GM12878 (cell line): ENCODE measurements at regions of chr12 and their contacts with region 1.

Region 1: DNA sequence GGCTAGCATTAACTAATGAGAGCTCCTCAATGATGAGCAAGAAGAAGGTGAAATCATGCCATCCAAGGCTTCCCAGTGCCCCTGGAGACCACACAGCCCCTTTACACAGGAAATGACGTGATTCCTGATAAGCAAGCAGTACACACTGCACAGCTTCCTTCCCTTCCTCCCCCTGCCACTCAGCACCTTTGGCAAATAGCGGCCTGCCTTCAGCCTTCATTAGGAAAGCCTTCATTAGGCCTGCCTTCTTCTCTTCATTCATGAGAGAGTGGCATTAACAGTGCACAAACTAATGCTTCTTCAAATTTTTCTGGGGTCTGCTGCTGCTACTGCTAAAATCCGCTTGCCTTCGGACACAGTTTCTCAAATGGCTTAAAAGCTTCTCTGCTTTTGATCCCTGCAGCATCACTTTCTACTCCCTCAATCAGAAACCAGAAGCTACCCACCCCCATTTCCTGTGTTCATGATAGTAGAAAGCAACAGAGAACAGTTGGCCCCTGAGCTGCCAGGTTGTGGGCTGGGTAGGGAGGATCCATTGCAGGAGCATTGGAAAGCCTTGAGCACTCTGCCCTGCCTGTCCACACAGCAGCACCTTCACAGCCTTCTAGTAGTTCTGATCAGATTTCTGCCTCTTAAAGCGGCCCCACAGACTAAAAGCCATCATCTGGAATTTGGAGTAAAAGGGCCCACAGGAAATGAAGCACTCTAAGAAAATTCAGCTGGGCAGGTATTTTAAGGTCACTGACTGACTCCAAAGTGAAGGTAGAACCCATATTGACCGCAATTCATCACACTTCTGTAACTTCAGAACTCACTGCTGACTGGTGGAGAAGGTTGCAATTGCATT is 103.8 kb upstream of the ETV6 start:
- DNase-seq: peak; percentile 78
- ATAC-seq: peak; percentile 90
- H3K4me3 ChIP-seq: peak overlapping the region; percentile 31; the same call in 1 of the 2 replicates
- H3K27ac ChIP-seq: peak overlapping the region; percentile 94
- H3K4me1 ChIP-seq: peaks cover 27% of the 10 kb centered on the region
- H3K27me3 ChIP-seq: no peaks in the 10 kb centered on the region
- CTCF ChIP-seq: peak in 2 of 3 experiments; percentile 39 to 44; a peak in 2 of 6 replicates
- EP300 ChIP-seq: 0 out of 4 replicates have a peak, but pooled peaks of 1 of the 2 experiments have one; percentile 30
- POLR2A ChIP-seq: peak; percentile 65
- RAD21 ChIP-seq: no peak

Region 2: GRCh38 chr12:11324426-11324825 is 221.3 kb before region 1 on chr12:
- CTCF ChIA-PET with region 1: no interaction called
- POLR2A ChIA-PET with region 1: no interaction called
- RAD21 ChIA-PET with region 1: no interaction called
- SMC1A ChIA-PET with region 1: no interaction called
- in situ Hi-C with region 1: no loop called
- intact Hi-C with region 1: no loop called
- DNase-seq: no peak
- ATAC-seq: no peak
- H3K4me3 ChIP-seq: no peak overlapping the region
- H3K27ac ChIP-seq: no peak overlapping the region
- H3K4me1 ChIP-seq: no peaks in the 10 kb centered on the region
- H3K27me3 ChIP-seq: no peaks in the 10 kb centered on the region
- CTCF ChIP-seq: no peak
- EP300 ChIP-seq: no peak
- POLR2A ChIP-seq: no peak
- RAD21 ChIP-seq: no peak

Region 3: DNA sequence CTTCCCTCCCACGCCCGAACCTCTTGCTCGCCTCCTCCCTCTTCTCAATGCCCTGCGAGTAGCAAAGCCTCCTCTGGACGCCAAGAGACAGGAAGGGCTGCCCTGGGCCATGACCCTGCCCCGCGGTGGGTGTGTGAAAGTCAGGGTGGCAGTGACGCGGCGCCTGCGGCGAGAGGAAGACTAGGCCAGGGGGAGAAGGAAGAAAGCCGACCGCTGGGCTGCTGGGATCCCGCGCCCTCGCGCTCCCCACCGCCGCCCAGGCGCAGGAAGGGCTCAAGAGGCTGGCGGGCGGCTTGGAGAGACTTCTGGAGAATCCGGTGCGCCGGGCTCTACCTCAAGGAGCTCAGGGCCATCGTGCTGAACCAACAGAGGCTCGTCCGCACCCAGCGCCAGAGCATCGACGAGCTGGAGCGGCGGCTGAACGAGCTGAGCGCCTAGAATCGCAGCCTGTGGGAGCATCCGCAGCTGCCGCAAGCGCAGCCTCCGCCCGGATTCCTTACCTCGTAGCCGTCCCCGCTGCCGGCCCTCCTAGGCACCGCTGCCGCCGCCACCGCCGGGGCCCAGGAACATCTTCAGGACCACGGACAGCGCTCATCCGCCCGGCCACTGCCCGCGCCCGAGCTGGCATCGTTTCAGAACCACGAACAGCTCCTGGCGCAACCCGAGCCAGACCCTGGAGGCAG is 45.4 kb before region 1 on chr12:
- CTCF ChIA-PET with region 1: interaction called, 7 read pairs
- POLR2A ChIA-PET with region 1: no interaction called
- RAD21 ChIA-PET with region 1: interaction called, 3 read pairs
- SMC1A ChIA-PET with region 1: interaction called, 6 read pairs
- in situ Hi-C with region 1: no loop called
- intact Hi-C with region 1: loop called (anchors 2 kb)
- DNase-seq: no peak
- ATAC-seq: peak; percentile 83
- H3K4me3 ChIP-seq: no peak overlapping the region
- H3K27ac ChIP-seq: no peak overlapping the region
- H3K4me1 ChIP-seq: peaks cover 5% of the 10 kb centered on the region
- H3K27me3 ChIP-seq: peaks cover 0 to 7% of the 10 kb centered on the region in 2 experiments; a peak in 3 of 4 replicates
- CTCF ChIP-seq: no peak
- EP300 ChIP-seq: no peak; a peak in 1 of 4 replicates
- POLR2A ChIP-seq: no peak
- RAD21 ChIP-seq: no peak

Region 4: DNA sequence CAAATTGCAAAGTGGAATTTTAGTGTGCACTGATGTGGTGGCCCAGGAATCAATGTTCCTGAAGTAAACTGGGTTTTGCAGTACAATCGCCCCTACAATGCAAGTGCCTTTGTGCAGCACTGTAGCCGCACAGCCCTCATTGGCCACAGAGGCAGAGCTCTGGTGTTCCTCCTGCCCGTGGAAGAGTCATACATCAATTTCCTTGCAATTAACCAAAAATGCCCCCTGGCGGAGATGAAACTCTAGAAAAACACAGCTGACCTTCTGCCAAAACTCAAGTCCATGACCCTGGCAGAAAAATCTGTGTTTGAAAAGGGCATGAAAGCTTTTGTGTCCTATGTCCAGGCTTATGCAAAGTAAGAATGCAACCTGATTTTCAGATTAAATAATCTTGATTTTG is 32.4 kb before region 1 on chr12:
- CTCF ChIA-PET with region 1: interaction called, 7 read pairs
- POLR2A ChIA-PET with region 1: no interaction called
- RAD21 ChIA-PET with region 1: interaction called, 12 read pairs
- SMC1A ChIA-PET with region 1: interaction called, 25 read pairs
- in situ Hi-C with region 1: no loop called
- intact Hi-C with region 1: no loop called
- DNase-seq: no peak
- ATAC-seq: no peak
- H3K4me3 ChIP-seq: no peak overlapping the region
- H3K27ac ChIP-seq: no peak overlapping the region
- H3K4me1 ChIP-seq: no peaks in the 10 kb centered on the region
- H3K27me3 ChIP-seq: no peaks in the 10 kb centered on the region
- CTCF ChIP-seq: 0 out of 6 replicates have a peak, but pooled peaks of 1 of the 3 experiments have one; percentile 11
- EP300 ChIP-seq: no peak
- POLR2A ChIP-seq: no peak
- RAD21 ChIP-seq: 0 out of 2 replicates have a peak, but pooled peaks have one; percentile 22

Region 5: DNA sequence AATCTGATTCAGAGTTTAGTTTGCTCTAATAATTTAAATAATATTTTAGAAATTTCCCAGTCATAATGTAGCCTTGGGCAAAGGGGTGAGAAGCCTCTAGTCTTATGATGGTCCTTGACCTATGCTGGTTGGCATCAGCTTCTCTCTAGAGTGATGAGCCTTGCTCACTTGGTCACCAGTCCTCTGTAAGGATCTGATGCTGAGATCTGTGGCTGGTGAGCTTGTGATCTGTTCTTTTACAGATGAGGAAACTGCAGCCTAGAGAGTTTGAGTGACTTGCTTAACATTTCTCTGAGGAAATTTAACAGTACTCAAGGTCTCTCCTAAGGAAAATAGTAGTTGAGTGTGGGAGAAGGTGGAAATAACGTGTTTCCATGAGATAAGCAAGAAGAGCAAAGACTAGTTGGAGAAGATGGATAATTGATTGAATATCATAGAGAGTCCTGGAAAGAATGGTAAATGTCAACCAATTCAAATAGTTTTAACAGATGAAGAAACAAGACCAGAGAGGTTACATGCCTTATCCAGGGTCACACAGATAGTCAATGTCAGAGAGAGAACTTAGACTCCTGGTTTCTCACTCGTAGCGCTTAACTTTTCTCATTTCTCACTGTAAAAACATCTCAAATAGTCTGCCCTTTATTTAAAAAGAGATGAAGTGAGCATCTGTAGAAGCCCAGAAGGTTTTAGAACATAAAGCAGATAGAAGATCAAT is 14.1 kb after region 1 on chr12:
- CTCF ChIA-PET with region 1: interaction called, 41 read pairs
- POLR2A ChIA-PET with region 1: interaction called, 18 read pairs
- RAD21 ChIA-PET with region 1: interaction called, 34 read pairs
- SMC1A ChIA-PET with region 1: interaction called, 35 read pairs
- in situ Hi-C with region 1: no loop called
- intact Hi-C with region 1: no loop called
- DNase-seq: no peak
- ATAC-seq: no peak
- H3K4me3 ChIP-seq: no peak overlapping the region
- H3K27ac ChIP-seq: peak overlapping the region; percentile 23; the same call in 1 of the 2 replicates
- H3K4me1 ChIP-seq: peaks cover 32% of the 10 kb centered on the region
- H3K27me3 ChIP-seq: no peaks in the 10 kb centered on the region
- CTCF ChIP-seq: no peak
- EP300 ChIP-seq: no peak
- POLR2A ChIP-seq: no peak
- RAD21 ChIP-seq: no peak

Region 6: DNA sequence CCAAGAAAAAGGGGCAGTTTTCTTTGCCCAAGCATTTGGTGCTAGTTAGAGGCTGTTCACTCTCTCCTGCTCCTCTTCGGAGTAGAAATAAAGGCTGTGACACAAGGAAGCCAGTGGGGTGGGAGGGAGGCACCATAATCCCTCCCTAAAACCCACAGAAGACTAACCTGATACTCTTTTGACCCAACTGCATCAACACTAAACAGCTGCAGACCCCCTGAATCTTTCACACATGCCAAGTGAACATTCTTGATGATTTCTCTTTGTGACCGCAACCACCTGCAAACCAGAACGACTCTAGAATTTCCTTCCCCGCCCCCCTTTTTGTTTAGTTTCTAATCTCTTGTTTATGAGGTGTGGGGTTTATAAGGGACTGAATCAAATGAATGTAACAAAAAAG is 349.2 kb after region 1 on chr12:
- CTCF ChIA-PET with region 1: no interaction called
- POLR2A ChIA-PET with region 1: no interaction called
- RAD21 ChIA-PET with region 1: no interaction called
- SMC1A ChIA-PET with region 1: no interaction called
- in situ Hi-C with region 1: no loop called
- intact Hi-C with region 1: no loop called
- DNase-seq: peak; percentile 31
- ATAC-seq: no peak
- H3K4me3 ChIP-seq: no peak overlapping the region
- H3K27ac ChIP-seq: peak overlapping the region; percentile 74
- H3K4me1 ChIP-seq: peaks cover 28% of the 10 kb centered on the region
- H3K27me3 ChIP-seq: no peaks in the 10 kb centered on the region
- CTCF ChIP-seq: no peak
- EP300 ChIP-seq: no peak
- POLR2A ChIP-seq: no peak
- RAD21 ChIP-seq: 0 out of 2 replicates have a peak, but pooled peaks have one; percentile 7

Region 7: DNA sequence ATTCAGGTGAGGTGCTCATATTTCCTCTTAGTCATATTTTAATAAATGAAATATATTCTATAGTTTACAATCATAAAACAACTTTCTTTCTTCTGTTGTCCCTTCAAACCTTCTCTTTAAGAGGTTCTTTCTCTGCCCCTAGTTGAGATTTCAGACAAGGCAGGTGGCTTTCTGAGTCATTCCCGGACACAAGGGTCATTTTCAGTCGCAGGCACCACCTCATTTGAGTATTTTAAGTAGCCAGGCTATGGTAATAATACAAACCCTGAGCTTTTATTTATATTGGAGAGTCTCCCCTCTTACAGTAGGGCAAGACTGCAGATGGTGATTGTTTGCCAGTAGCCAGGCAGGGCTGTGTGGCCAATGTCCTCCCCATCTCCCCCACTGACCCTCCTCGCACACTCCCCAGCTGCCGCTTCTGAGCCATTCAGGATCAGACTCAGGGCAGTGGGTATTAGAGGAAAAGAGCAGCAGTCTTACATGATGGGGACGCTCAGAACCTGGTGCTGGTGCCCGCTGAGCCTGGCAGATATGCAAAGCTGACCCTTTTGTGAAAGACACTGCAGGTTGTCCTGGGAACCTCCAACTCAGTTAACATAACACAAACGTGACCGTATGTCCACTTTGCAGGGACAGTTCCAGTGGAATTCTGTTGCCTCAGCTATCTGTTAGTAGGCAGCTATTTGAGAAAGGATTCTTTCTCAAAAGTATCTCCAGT is 423.9 kb after region 1 on chr12:
- CTCF ChIA-PET with region 1: no interaction called
- POLR2A ChIA-PET with region 1: no interaction called
- RAD21 ChIA-PET with region 1: no interaction called
- SMC1A ChIA-PET with region 1: no interaction called
- in situ Hi-C with region 1: no loop called
- intact Hi-C with region 1: no loop called
- DNase-seq: peak; percentile 47
- ATAC-seq: peak; percentile 92
- H3K4me3 ChIP-seq: no peak overlapping the region
- H3K27ac ChIP-seq: peak overlapping the region; percentile 48
- H3K4me1 ChIP-seq: peaks cover 17% of the 10 kb centered on the region
- H3K27me3 ChIP-seq: no peaks in the 10 kb centered on the region
- CTCF ChIP-seq: no peak
- EP300 ChIP-seq: peak; percentile 13 to 27; a peak in 1 of 4 replicates
- POLR2A ChIP-seq: no peak
- RAD21 ChIP-seq: peak; percentile 25; the same call in 1 of the 2 replicates